Naive thymus-derived CD4-positive, alpha-beta T cell (primary cell): ENCODE measurements at regions of chr17 and their contacts with region 1.

Region 1: DNA sequence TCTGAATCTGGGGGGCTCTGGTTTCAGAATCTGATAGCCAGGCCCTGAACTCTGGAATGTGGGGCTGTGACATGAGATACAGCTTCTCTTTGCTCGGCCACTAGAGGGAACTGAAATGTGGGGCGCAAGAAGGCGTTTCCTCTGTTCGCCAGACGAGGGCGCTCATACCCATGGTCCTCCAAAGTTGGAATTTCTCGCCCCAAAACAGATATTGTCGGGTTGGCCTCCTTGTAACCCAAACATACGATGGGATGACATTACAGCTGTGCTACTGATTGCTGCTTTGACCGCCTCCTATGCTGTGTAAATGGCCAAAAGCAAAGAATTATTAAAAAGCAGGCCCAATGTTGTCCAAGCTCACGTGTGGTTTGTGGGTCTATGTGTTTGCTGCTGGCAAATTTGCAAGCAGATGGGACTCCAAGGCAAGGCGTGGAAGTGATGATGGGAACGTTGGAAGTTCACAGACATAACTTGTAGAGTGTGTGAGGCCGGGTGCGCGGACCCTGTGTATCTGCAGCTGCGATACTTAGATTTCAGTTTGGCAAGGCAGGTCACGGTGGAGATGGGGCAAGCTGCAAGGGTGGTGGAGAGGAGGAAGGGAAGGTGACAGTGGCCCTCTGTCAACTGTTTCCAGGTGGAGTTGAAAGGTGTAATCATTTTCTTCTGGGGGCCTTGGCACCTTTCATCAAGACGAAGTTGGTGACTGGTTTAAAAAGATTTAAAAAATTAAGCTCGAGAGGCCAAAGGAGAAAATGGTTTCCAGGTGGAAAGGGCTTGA is 13.0 kb upstream of the MSI2 start:
- DNase-seq: peak; percentile 52 to 78 (median 68)
- ATAC-seq: peak; percentile 99
- H3K4me3 ChIP-seq: no peak overlapping the region
- H3K4me3 Mint-ChIP-seq: no peak overlapping the region
- H3K27ac ChIP-seq: no peak overlapping the region
- H3K27ac Mint-ChIP-seq: peak overlapping the region in 1 of 9 donors; percentile 36
- H3K4me1 ChIP-seq: no peaks in the 10 kb centered on the region
- H3K4me1 Mint-ChIP-seq: peaks cover 0 to 13% (median 0%) of the 10 kb centered on the region in 7 donors
- H3K27me3 ChIP-seq: no peaks in the 10 kb centered on the region
- H3K27me3 Mint-ChIP-seq: peaks cover 2 to 33% (median 5%) of the 10 kb centered on the region in 5 donors

Region 2: GRCh38 chr17:57033295-57033694 is 210.1 kb before region 1 on chr17:
- CTCF ChIA-PET with region 1: no interaction called
- POLR2A ChIA-PET with region 1: no interaction called
- intact Hi-C with region 1: no loop called
- DNase-seq: no peak
- ATAC-seq: no peak
- H3K4me3 ChIP-seq: no peak overlapping the region
- H3K4me3 Mint-ChIP-seq: no peak overlapping the region
- H3K27ac ChIP-seq: no peak overlapping the region
- H3K27ac Mint-ChIP-seq: no peak overlapping the region
- H3K4me1 ChIP-seq: no peaks in the 10 kb centered on the region
- H3K4me1 Mint-ChIP-seq: no peaks in the 10 kb centered on the region
- H3K27me3 ChIP-seq: no peaks in the 10 kb centered on the region
- H3K27me3 Mint-ChIP-seq: peaks cover 18 to 42% (median 24%) of the 10 kb centered on the region in 5 donors

Region 3: GRCh38 chr17:57284984-57285646 is 41.8 kb after region 1 on chr17:
- CTCF ChIA-PET with region 1: interaction called, 6 read pairs
- POLR2A ChIA-PET with region 1: no interaction called
- intact Hi-C with region 1: loop called (anchors 1 to 5 kb)
- DNase-seq: peak in 8 of 9 donors; percentile 4 to 75 (median 16)
- ATAC-seq: peak; percentile 75
- H3K4me3 ChIP-seq: peak overlapping the region; percentile 20
- H3K4me3 Mint-ChIP-seq: peak overlapping the region; percentile 70 to 85 (median 75)
- H3K27ac ChIP-seq: peak overlapping the region; percentile 18
- H3K27ac Mint-ChIP-seq: peak overlapping the region; percentile 55 to 93 (median 79)
- H3K4me1 ChIP-seq: peaks cover 24 to 34% of the 10 kb centered on the region in 2 donors
- H3K4me1 Mint-ChIP-seq: peaks cover 60 to 90% (median 88%) of the 10 kb centered on the region in 7 donors
- H3K27me3 ChIP-seq: no peaks in the 10 kb centered on the region
- H3K27me3 Mint-ChIP-seq: no peaks in the 10 kb centered on the region

Region 4: DNA sequence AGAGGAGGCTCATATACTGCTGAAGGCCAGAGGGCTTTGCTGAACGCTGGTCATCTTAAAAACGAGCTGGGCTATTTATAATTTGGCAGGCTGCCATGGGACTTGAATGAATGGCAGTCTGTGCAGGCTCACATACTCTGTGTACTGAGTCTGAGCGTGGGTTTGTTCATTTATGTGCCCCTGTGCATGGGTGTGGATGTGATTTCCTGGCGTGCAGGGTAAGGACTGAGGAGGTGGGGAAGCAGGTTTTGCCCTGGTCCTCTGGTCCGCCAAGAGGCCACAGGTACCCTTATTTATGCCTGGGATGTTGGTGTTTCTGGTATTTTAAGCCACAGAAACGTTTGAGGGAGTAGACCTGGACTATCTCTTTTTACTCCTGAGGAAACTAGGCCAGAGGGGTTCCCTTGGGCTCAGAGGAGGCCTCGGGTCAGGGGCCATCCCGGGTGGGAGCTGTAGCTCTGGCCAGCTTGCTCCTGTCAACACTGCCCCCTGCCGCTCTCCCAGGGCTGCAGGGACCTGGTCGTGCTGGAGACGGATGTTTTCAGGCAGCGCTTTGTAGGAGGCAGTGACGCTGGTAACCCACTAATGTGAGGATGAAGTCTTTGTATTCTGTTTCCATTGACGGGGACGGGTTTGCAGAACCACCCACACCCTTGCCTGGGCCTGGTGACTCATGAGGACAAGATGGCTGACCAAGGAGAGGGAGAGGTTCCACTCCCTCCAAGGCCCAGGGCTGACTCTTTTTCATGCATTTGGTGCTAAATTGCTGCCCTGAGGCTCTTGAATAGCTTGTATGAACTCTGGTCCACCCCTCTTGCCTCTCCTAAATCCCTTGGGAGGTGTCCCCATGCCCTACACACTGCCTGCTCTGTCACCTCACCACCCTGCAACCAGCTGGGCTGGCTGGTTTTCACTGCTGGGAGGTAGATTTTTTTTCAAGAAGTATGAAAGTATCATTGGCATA is 197.4 kb after region 1 on chr17:
- CTCF ChIA-PET with region 1: interaction called, 9 read pairs
- POLR2A ChIA-PET with region 1: no interaction called
- intact Hi-C with region 1: loop called (anchors 1 to 2 kb)
- DNase-seq: peak; percentile 26 to 82 (median 70)
- ATAC-seq: peak; percentile 88
- H3K4me3 ChIP-seq: no peak overlapping the region
- H3K4me3 Mint-ChIP-seq: peak overlapping the region; percentile 36 to 78 (median 52)
- H3K27ac ChIP-seq: peak overlapping the region; percentile 36
- H3K27ac Mint-ChIP-seq: peak overlapping the region; percentile 81 to 96 (median 92)
- H3K4me1 ChIP-seq: peaks cover 31 to 39% of the 10 kb centered on the region in 2 donors
- H3K4me1 Mint-ChIP-seq: peaks cover 58 to 87% (median 81%) of the 10 kb centered on the region in 7 donors
- H3K27me3 ChIP-seq: no peaks in the 10 kb centered on the region
- H3K27me3 Mint-ChIP-seq: no peaks in the 10 kb centered on the region

Region 5: GRCh38 chr17:57535249-57535966 is 292.0 kb after region 1 on chr17:
- CTCF ChIA-PET with region 1: no interaction called
- POLR2A ChIA-PET with region 1: no interaction called
- intact Hi-C with region 1: loop called (anchors 2 to 10 kb)
- DNase-seq: no peak
- ATAC-seq: no peak
- H3K4me3 ChIP-seq: no peak overlapping the region
- H3K4me3 Mint-ChIP-seq: no peak overlapping the region
- H3K27ac ChIP-seq: no peak overlapping the region
- H3K27ac Mint-ChIP-seq: peak overlapping the region in 4 of 9 donors; percentile 29 to 57 (median 47)
- H3K4me1 ChIP-seq: peaks cover 0 to 13% of the 10 kb centered on the region in 2 donors
- H3K4me1 Mint-ChIP-seq: peaks cover 28 to 68% (median 61%) of the 10 kb centered on the region in 7 donors
- H3K27me3 ChIP-seq: no peaks in the 10 kb centered on the region
- H3K27me3 Mint-ChIP-seq: no peaks in the 10 kb centered on the region

Region 6: GRCh38 chr17:57747221-57748017 is 504.1 kb after region 1 on chr17:
- CTCF ChIA-PET with region 1: interaction called, 36 read pairs
- POLR2A ChIA-PET with region 1: interaction called, 3 read pairs
- intact Hi-C with region 1: loop called (anchors 1 kb)
- DNase-seq: peak in 8 of 9 donors; percentile 18 to 65 (median 50)
- ATAC-seq: peak; percentile 66
- H3K4me3 ChIP-seq: no peak overlapping the region
- H3K4me3 Mint-ChIP-seq: no peak overlapping the region
- H3K27ac ChIP-seq: no peak overlapping the region
- H3K27ac Mint-ChIP-seq: peak overlapping the region in 1 of 9 donors; percentile 2
- H3K4me1 ChIP-seq: no peaks in the 10 kb centered on the region
- H3K4me1 Mint-ChIP-seq: peaks cover 0 to 6% (median 0%) of the 10 kb centered on the region in 7 donors
- H3K27me3 ChIP-seq: no peaks in the 10 kb centered on the region
- H3K27me3 Mint-ChIP-seq: peaks cover 0 to 15% (median 4%) of the 10 kb centered on the region in 5 donors

Region 7: GRCh38 chr17:58112970-58113631 is 869.7 kb after region 1 on chr17:
- CTCF ChIA-PET with region 1: no interaction called
- POLR2A ChIA-PET with region 1: no interaction called
- intact Hi-C with region 1: loop called in 1 of 2 experiments (anchors 1 kb)
- DNase-seq: peak; percentile 62 to 86 (median 76)
- ATAC-seq: peak; percentile 96
- H3K4me3 ChIP-seq: no peak overlapping the region
- H3K4me3 Mint-ChIP-seq: no peak overlapping the region
- H3K27ac ChIP-seq: no peak overlapping the region
- H3K27ac Mint-ChIP-seq: peak overlapping the region in 1 of 9 donors; percentile 3
- H3K4me1 ChIP-seq: no peaks in the 10 kb centered on the region
- H3K4me1 Mint-ChIP-seq: peaks cover 0 to 5% (median 0%) of the 10 kb centered on the region in 7 donors
- H3K27me3 ChIP-seq: no peaks in the 10 kb centered on the region
- H3K27me3 Mint-ChIP-seq: peaks cover 0 to 16% (median 8%) of the 10 kb centered on the region in 5 donors